Caco-2 (cell line): ENCODE measurements at regions of chr21 and their contacts with region 1.

Region 1: DNA sequence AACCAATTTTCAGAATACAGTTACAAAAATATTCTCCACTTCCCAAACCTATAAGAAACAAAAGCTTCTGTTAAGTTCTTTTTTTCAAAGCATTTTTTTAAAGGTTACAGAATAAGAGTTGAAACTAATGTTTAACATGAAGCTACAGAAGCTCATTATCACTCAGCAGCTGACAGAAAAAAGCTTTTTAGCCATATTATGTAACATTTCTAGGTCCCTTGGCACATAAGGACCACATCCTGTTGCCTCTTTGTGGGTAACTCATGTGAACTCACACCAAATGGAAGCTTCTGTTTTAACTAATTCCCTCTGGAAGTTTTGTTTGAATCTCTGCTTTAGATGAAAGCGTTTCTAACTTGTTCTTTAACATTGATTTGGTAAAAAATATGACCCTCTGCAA is 242.5 kb upstream of the TMPRSS15 start:
- DNase-seq: no peak
- H3K4me3 ChIP-seq: no peak overlapping the region
- H3K4me3 Mint-ChIP-seq: no peak overlapping the region
- H3K27ac Mint-ChIP-seq: no peak overlapping the region
- H3K4me1 ChIP-seq: peaks cover 6% of the 10 kb centered on the region; the same call in 1 of the 2 replicates
- H3K4me1 Mint-ChIP-seq: no peaks in the 10 kb centered on the region
- H3K27me3 ChIP-seq: no peaks in the 10 kb centered on the region
- H3K27me3 Mint-ChIP-seq: no peaks in the 10 kb centered on the region
- CTCF ChIP-seq: no peak

Region 2: GRCh38 chr21:18007121-18007520 is 639.0 kb before region 1 on chr21:
- CTCF ChIA-PET with region 1: no interaction called
- POLR2A ChIA-PET with region 1: no interaction called
- intact Hi-C with region 1: no loop called
- DNase-seq: no peak
- H3K4me3 ChIP-seq: no peak overlapping the region
- H3K4me3 Mint-ChIP-seq: no peak overlapping the region
- H3K27ac Mint-ChIP-seq: no peak overlapping the region
- H3K4me1 ChIP-seq: no peaks in the 10 kb centered on the region
- H3K4me1 Mint-ChIP-seq: no peaks in the 10 kb centered on the region
- H3K27me3 ChIP-seq: no peaks in the 10 kb centered on the region
- H3K27me3 Mint-ChIP-seq: no peaks in the 10 kb centered on the region
- CTCF ChIP-seq: no peak

Region 3: DNA sequence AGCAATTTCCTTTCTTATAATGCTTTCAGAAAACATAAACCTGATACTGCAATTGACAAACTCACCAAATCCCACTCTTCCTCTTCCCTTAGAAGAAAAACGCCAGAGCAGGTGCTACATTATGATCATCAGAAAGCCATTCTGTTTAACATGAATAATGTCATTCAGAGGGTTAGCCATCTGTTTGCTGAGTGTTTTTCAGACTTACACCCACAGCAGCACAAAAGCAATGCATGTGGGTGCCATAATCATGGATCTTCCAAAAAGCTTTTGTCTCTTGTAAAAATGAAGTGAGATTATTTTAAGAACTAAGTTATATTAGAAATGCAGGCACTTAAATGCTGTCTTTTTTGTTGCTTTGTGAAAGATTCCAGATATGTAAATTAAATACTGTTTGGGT is 37.9 kb before region 1 on chr21:
- CTCF ChIA-PET with region 1: no interaction called
- POLR2A ChIA-PET with region 1: no interaction called
- intact Hi-C with region 1: loop called (anchors 2 kb)
- DNase-seq: no peak
- H3K4me3 ChIP-seq: no peak overlapping the region
- H3K4me3 Mint-ChIP-seq: no peak overlapping the region
- H3K27ac Mint-ChIP-seq: no peak overlapping the region
- H3K4me1 ChIP-seq: no peaks in the 10 kb centered on the region
- H3K4me1 Mint-ChIP-seq: no peaks in the 10 kb centered on the region
- H3K27me3 ChIP-seq: no peaks in the 10 kb centered on the region
- H3K27me3 Mint-ChIP-seq: peaks cover 4% of the 10 kb centered on the region
- CTCF ChIP-seq: no peak